ENCODE measurements at regions of chr12 and their contacts with region 1.

Region 1: DNA sequence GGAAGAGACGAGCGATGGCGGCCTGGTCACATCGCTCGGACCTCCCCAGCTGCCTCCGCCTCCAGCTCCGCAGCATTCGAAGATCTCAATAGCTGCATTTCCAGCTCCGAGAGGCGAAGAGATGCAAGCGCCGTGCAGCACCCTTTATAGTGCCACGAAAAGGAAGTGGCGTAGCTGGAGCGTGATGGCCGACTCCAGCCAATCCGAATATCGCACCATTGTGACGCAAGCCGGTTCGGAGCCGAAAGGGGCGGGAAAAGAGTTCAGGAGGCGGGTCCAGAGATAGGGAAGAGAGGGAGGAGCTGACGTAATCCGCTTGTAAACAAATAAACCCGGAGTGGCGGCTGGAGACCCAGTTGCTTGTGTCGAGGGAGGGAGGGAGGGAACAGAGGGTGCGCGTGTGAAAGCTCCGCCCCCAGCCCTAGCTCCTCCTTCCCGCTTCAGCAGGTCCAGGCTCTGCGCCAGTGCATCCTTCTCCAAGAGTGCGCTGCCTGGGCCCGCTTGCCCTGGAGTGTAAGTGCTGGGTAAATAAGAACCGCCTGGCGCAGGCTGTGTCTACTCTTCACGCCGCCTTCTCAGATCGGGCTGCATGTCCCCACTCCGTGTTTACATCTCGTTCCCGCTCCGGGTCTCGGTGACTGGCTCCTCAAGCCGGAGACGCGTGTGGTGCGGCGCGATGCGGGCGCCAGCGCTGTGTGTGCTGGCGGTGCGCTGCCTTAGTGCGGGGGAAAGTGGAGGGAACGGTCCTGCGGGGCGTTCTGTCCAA is at the start of gene BTG1:
- DNase-seq: peak; percentile 98 to 99
- H3K4me3 ChIP-seq: peak within 1 kb of the TSS; percentile 64
- H3K4me3 Mint-ChIP-seq: peak within 1 kb of the TSS; percentile 81
- H3K27ac Mint-ChIP-seq: peak within 1 kb of the TSS; percentile 96
- H3K4me1 ChIP-seq: peaks cover 26% of the 10 kb centered on the region
- H3K4me1 Mint-ChIP-seq: peaks cover 30% of the 10 kb centered on the region
- H3K27me3 ChIP-seq: no peaks in the 10 kb centered on the region
- H3K27me3 Mint-ChIP-seq: no peaks in the 10 kb centered on the region
- CTCF ChIP-seq: no peak
- total RNA-seq, gene BTG1: 23.1 and 27.1 TPM in 2 replicates

Region 2: DNA sequence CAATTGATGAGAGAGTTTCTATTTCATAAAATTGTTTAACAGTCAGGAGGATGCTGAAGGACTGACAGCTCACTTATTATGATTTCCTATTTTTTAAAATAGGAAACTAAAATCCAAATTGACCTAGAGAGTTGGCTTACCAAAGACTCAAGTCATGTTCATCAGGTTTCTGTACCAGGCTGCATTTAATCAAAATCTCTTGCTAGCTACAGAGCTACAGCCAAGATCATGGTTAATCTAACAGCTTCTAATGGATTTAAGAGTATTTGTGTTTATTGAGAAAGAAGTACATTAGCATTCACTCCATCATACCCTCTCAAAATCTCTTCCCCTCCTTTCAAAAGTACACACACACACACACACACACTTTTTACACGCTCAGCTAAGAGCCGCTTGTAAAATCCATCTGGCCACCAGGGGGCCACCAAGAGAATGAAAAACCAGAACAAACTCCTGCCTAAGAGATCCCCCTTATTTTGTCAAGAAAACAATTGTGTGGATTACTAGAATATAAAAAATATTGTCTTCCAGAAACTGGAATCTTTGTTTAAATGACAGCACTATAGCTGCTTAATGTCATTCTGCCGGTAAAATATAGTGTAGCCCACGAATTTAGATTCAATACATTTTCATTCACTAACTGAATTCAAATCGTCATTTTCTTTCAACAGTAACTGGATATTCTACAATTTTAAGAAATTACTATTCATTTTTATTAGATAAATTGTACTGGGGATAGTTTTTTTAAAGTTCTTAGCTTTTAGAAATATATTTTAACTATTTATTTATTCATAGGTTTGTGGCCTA is 334.2 kb before region 1 on chr12:
- CTCF ChIA-PET with region 1: interaction called, 5 read pairs
- POLR2A ChIA-PET with region 1: no interaction called
- intact Hi-C with region 1: loop called (anchors 1 kb)
- DNase-seq: peak; percentile 43 to 70
- H3K4me3 ChIP-seq: no peak overlapping the region
- H3K4me3 Mint-ChIP-seq: no peak overlapping the region
- H3K27ac Mint-ChIP-seq: no peak overlapping the region
- H3K4me1 ChIP-seq: no peaks in the 10 kb centered on the region
- H3K4me1 Mint-ChIP-seq: no peaks in the 10 kb centered on the region
- H3K27me3 ChIP-seq: no peaks in the 10 kb centered on the region
- H3K27me3 Mint-ChIP-seq: no peaks in the 10 kb centered on the region
- CTCF ChIP-seq: peak; percentile 80 to 83

Region 3: GRCh38 chr12:92002673-92003382 is 143.1 kb before region 1 on chr12:
- CTCF ChIA-PET with region 1: no interaction called
- POLR2A ChIA-PET with region 1: interaction called, 7 read pairs
- intact Hi-C with region 1: loop called (anchors 2 kb)
- DNase-seq: peak in 1 of 2 experiments; percentile 34
- H3K4me3 ChIP-seq: no peak overlapping the region
- H3K4me3 Mint-ChIP-seq: peak overlapping the region; percentile 64
- H3K27ac Mint-ChIP-seq: peak overlapping the region; percentile 69
- H3K4me1 ChIP-seq: peaks cover 22% of the 10 kb centered on the region
- H3K4me1 Mint-ChIP-seq: peaks cover 24% of the 10 kb centered on the region
- H3K27me3 ChIP-seq: no peaks in the 10 kb centered on the region
- H3K27me3 Mint-ChIP-seq: no peaks in the 10 kb centered on the region
- CTCF ChIP-seq: no peak

Region 4: GRCh38 chr12:92085040-92085735 is 60.7 kb before region 1 on chr12:
- CTCF ChIA-PET with region 1: no interaction called
- POLR2A ChIA-PET with region 1: interaction called, 3 read pairs
- intact Hi-C with region 1: loop called (anchors 1 kb)
- DNase-seq: no peak
- H3K4me3 ChIP-seq: no peak overlapping the region
- H3K4me3 Mint-ChIP-seq: no peak overlapping the region
- H3K27ac Mint-ChIP-seq: no peak overlapping the region
- H3K4me1 ChIP-seq: peaks cover 16% of the 10 kb centered on the region
- H3K4me1 Mint-ChIP-seq: peaks cover 18% of the 10 kb centered on the region
- H3K27me3 ChIP-seq: no peaks in the 10 kb centered on the region
- H3K27me3 Mint-ChIP-seq: no peaks in the 10 kb centered on the region
- CTCF ChIP-seq: no peak

Region 5: GRCh38 chr12:92170050-92170449 is 24.1 kb after region 1 on chr12:
- CTCF ChIA-PET with region 1: interaction called, 3 read pairs
- POLR2A ChIA-PET with region 1: interaction called, 12 read pairs
- intact Hi-C with region 1: no loop called
- DNase-seq: no peak
- H3K4me3 ChIP-seq: no peak overlapping the region
- H3K4me3 Mint-ChIP-seq: no peak overlapping the region
- H3K27ac Mint-ChIP-seq: no peak overlapping the region
- H3K4me1 ChIP-seq: no peaks in the 10 kb centered on the region
- H3K4me1 Mint-ChIP-seq: no peaks in the 10 kb centered on the region
- H3K27me3 ChIP-seq: no peaks in the 10 kb centered on the region
- H3K27me3 Mint-ChIP-seq: no peaks in the 10 kb centered on the region
- CTCF ChIP-seq: no peak

Region 6: GRCh38 chr12:92408072-92408900 is 262.4 kb after region 1 on chr12:
- CTCF ChIA-PET with region 1: no interaction called
- POLR2A ChIA-PET with region 1: no interaction called
- intact Hi-C with region 1: loop called (anchors 5 kb)
- DNase-seq: peak; percentile 52 to 59
- H3K4me3 ChIP-seq: no peak overlapping the region
- H3K4me3 Mint-ChIP-seq: no peak overlapping the region
- H3K27ac Mint-ChIP-seq: no peak overlapping the region
- H3K4me1 ChIP-seq: no peaks in the 10 kb centered on the region
- H3K4me1 Mint-ChIP-seq: no peaks in the 10 kb centered on the region
- H3K27me3 ChIP-seq: no peaks in the 10 kb centered on the region
- H3K27me3 Mint-ChIP-seq: no peaks in the 10 kb centered on the region
- CTCF ChIP-seq: peak; percentile 61 to 64

Region 7: GRCh38 chr12:93137656-93138612 is 992.0 kb after region 1 on chr12:
- CTCF ChIA-PET with region 1: no interaction called
- POLR2A ChIA-PET with region 1: no interaction called
- intact Hi-C with region 1: no loop called
- DNase-seq: no peak
- H3K4me3 ChIP-seq: no peak overlapping the region
- H3K4me3 Mint-ChIP-seq: no peak overlapping the region
- H3K27ac Mint-ChIP-seq: no peak overlapping the region
- H3K4me1 ChIP-seq: peaks cover 67% of the 10 kb centered on the region
- H3K4me1 Mint-ChIP-seq: peaks cover 58% of the 10 kb centered on the region
- H3K27me3 ChIP-seq: no peaks in the 10 kb centered on the region
- H3K27me3 Mint-ChIP-seq: no peaks in the 10 kb centered on the region
- CTCF ChIP-seq: no peak